Heart right ventricle (tissue), 16 donors: ENCODE measurements at regions of chr4 and their contacts with region 1.

Region 1: DNA sequence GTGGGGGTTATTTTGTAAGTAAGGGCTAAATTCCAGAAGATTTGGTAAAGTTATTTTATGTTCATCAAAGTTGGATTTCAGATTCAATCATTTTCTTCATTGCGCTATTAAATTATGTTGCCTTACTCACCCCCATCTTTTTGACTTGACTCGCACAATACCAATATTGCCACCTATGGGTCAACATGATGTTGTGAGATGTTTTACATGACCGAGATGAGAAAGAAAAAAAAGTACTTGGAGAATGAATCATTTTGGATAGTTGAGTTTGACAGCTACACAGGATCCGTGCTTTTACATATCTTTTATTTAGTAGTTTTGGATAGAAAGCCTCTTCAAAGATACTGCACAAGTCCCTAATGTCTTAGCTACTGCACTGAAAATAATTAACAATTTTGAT is 224.2 kb upstream of the EMCN start:
- DNase-seq: peak in 1 of 2 donors; percentile 9
- ATAC-seq: no peak
- H3K4me3 ChIP-seq: no peak overlapping the region
- H3K27ac ChIP-seq: no peak overlapping the region
- H3K4me1 ChIP-seq: peaks cover 0 to 19% (median 11%) of the 10 kb centered on the region in 9 donors
- H3K27me3 ChIP-seq: no peaks in the 10 kb centered on the region
- CTCF ChIP-seq: peak; percentile 28 to 71 (median 50)

Region 2: DNA sequence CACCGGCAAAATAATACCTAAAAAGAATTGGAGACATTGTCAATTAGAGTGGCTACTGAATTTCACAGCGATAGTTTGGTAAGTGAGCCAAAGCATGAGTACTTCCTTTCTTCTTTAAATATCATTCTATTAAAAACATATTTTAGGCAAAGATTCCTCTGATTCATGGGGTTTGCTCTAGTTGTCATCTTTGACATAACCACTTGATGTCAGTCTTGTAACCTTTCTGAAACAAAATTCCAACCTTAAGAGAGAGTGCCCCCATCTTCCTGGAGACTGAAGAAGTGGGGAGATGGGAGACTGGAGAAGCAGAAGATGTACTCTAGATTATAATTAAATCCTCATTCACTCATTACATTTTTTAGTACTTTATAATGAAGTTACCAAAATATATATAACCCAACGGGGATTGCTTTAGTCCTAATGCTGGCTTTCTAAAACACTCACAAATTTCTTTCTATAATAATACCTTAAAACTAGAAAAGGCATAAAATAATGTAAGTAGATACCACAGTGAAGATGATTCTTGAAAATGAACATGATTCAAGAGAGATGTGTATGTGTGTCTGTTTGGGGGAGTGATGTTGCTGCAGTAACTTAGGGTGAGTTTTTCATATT is 320.6 kb before region 1 on chr4:
- intact Hi-C with region 1: loop called in 6 of 10 experiments (anchors 2 to 5 kb)
- DNase-seq: no peak
- ATAC-seq: peak in 6 of 8 donors; percentile 43 to 81 (median 58)
- H3K4me3 ChIP-seq: peak overlapping the region in 3 of 10 donors; percentile 9 to 21 (median 10)
- H3K27ac ChIP-seq: peak overlapping the region in 5 of 10 donors; percentile 6 to 56 (median 37)
- H3K4me1 ChIP-seq: peaks cover 0 to 37% (median 8%) of the 10 kb centered on the region in 9 donors
- H3K27me3 ChIP-seq: no peaks in the 10 kb centered on the region
- CTCF ChIP-seq: peak; percentile 18 to 77 (median 57)

Region 3: DNA sequence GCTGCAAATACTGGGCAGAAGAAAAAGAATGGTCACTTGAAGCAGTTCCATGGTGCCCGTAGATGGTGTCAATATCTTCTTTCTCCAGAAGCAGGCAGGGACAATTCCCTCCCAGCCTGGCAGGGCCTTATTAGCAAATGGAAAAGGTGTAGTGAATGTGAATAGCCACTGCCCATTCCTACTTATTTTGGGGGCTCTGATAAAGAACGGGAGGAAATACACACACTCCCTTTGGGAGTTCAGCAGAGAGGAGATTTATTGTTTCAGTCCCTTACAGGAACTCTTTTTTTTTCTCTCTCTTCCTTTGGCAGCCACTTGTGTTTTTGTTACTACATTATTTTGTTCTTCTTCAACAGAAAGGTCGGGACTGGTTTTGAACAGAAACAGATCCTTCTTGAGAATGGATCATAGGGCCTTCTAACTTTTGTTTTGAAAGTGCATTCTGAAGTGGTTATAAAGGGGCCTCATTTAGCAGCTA is 224.1 kb before region 1 on chr4 and contains the start of gene EMCN:
- intact Hi-C with region 1: loop called in 4 of 10 experiments (anchors 2 to 5 kb)
- DNase-seq: peak in 1 of 2 donors; percentile 56
- ATAC-seq: peak; percentile 75 to 93 (median 91)
- H3K4me3 ChIP-seq: peak within 1 kb of the TSS; percentile 6 to 64 (median 48)
- H3K27ac ChIP-seq: peak within 1 kb of the TSS; percentile 18 to 86 (median 76)
- H3K4me1 ChIP-seq: peaks cover 0 to 17% (median 0%) of the 10 kb centered on the region in 9 donors
- H3K27me3 ChIP-seq: no peaks in the 10 kb centered on the region
- CTCF ChIP-seq: no peak
- total RNA-seq, gene EMCN: 20.4 to 49.0 (median 35.6) TPM

Region 4: GRCh38 chr4:100649417-100649816 is 92.6 kb before region 1 on chr4:
- intact Hi-C with region 1: loop called in 1 of 10 experiments (anchors 10 kb)
- DNase-seq: no peak
- ATAC-seq: peak in 5 of 8 donors; percentile 44 to 83 (median 79)
- H3K4me3 ChIP-seq: no peak overlapping the region
- H3K27ac ChIP-seq: peak overlapping the region in 5 of 10 donors; percentile 5 to 51 (median 41)
- H3K4me1 ChIP-seq: peaks cover 0 to 26% (median 18%) of the 10 kb centered on the region in 9 donors
- H3K27me3 ChIP-seq: no peaks in the 10 kb centered on the region
- CTCF ChIP-seq: no peak

Region 5: DNA sequence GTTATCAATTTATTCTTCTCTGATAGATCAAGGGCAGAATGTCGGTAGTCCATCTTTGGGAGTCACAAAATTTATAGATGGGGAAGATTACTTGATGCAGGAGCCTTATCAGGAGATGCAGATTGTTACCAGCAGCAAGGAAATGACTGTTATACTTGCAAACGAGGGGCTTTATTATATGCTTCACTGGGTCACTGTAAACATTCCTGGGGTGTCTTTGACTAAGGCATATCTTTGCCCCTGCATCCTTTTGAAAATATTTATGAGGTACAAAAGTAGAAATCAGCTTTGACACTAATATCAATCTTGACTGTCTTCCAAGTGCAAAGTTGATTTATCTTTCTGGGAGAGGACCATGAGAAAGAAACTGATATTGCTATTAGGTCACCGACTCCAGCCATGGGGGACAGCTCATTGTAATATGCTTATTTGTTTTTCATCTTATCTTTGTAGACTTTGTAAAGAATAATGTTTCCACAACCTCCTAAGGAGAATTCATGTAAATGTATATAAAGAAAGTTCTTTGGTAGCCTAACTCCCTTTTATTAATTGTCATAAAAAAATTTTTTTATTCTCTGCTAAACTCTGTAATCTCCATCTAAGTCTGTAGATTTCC is 46.9 kb before region 1 on chr4:
- intact Hi-C with region 1: loop called in 1 of 10 experiments (anchors 5 kb)
- DNase-seq: no peak
- ATAC-seq: no peak
- H3K4me3 ChIP-seq: no peak overlapping the region
- H3K27ac ChIP-seq: no peak overlapping the region
- H3K4me1 ChIP-seq: peaks cover 0 to 13% (median 0%) of the 10 kb centered on the region in 9 donors
- H3K27me3 ChIP-seq: no peaks in the 10 kb centered on the region
- CTCF ChIP-seq: no peak

Region 6: GRCh38 chr4:101102114-101102742 is 360.2 kb after region 1 on chr4:
- intact Hi-C with region 1: no loop called
- DNase-seq: peak; percentile 39 to 46
- ATAC-seq: peak in 7 of 8 donors; percentile 51 to 85 (median 74)
- H3K4me3 ChIP-seq: no peak overlapping the region
- H3K27ac ChIP-seq: peak overlapping the region in 2 of 10 donors; percentile 12 to 13
- H3K4me1 ChIP-seq: peaks cover 3 to 39% (median 33%) of the 10 kb centered on the region in 9 donors
- H3K27me3 ChIP-seq: no peaks in the 10 kb centered on the region
- CTCF ChIP-seq: no peak